ENCODE measurements at regions of chr12 and their contacts with region 1.

Region 1: GRCh38 chr12:49347384-49348237 is 923 bp downstream of the DNAJC22 start:
- DNase-seq: peak; percentile 98 to 99
- H3K4me3 ChIP-seq: peak overlapping the region; percentile 43
- H3K4me3 Mint-ChIP-seq: peak overlapping the region; percentile 90
- H3K27ac Mint-ChIP-seq: peak overlapping the region; percentile 98
- H3K4me1 ChIP-seq: peaks cover 16% of the 10 kb centered on the region
- H3K4me1 Mint-ChIP-seq: peaks cover 14% of the 10 kb centered on the region
- H3K27me3 ChIP-seq: no peaks in the 10 kb centered on the region
- H3K27me3 Mint-ChIP-seq: no peaks in the 10 kb centered on the region
- CTCF ChIP-seq: peak; percentile 97 to 98

Region 2: GRCh38 chr12:49288412-49288853 is 59.2 kb before region 1 on chr12:
- CTCF ChIA-PET with region 1: interaction called, 22 read pairs
- POLR2A ChIA-PET with region 1: no interaction called
- intact Hi-C with region 1: loop called (anchors 2 kb)
- DNase-seq: peak in 1 of 2 experiments; percentile 75
- H3K4me3 ChIP-seq: no peak overlapping the region
- H3K4me3 Mint-ChIP-seq: no peak overlapping the region
- H3K27ac Mint-ChIP-seq: no peak overlapping the region
- H3K4me1 ChIP-seq: peaks cover 3% of the 10 kb centered on the region; the same call in 1 of the 2 replicates
- H3K4me1 Mint-ChIP-seq: peaks cover 6% of the 10 kb centered on the region
- H3K27me3 ChIP-seq: no peaks in the 10 kb centered on the region
- H3K27me3 Mint-ChIP-seq: peaks cover 3% of the 10 kb centered on the region
- CTCF ChIP-seq: peak; percentile 77 to 96

Region 3: GRCh38 chr12:49322708-49323523 is 24.7 kb before region 1 on chr12 and contains the start of gene TROAP:
- CTCF ChIA-PET with region 1: interaction called, 68 read pairs
- POLR2A ChIA-PET with region 1: interaction called, 13 read pairs
- intact Hi-C with region 1: no loop called
- DNase-seq: peak; percentile 99 to 100
- H3K4me3 ChIP-seq: peak within 1 kb of the TSS; percentile 89
- H3K4me3 Mint-ChIP-seq: peak within 1 kb of the TSS; percentile 99
- H3K27ac Mint-ChIP-seq: peak within 1 kb of the TSS; percentile 98
- H3K4me1 ChIP-seq: peaks cover 10% of the 10 kb centered on the region; the same call in 1 of the 2 replicates
- H3K4me1 Mint-ChIP-seq: peaks cover 6% of the 10 kb centered on the region
- H3K27me3 ChIP-seq: no peaks in the 10 kb centered on the region
- H3K27me3 Mint-ChIP-seq: no peaks in the 10 kb centered on the region
- CTCF ChIP-seq: no peak
- total RNA-seq, gene TROAP: 134 and 135 TPM in 2 replicates

Region 4: GRCh38 chr12:49336645-49337584 is 10.7 kb before region 1 on chr12 and contains the start of gene C1QL4:
- CTCF ChIA-PET with region 1: interaction called, 153 read pairs
- POLR2A ChIA-PET with region 1: interaction called, 30 read pairs
- intact Hi-C with region 1: no loop called
- DNase-seq: peak; percentile 87 to 97
- H3K4me3 ChIP-seq: peak within 1 kb of the TSS; percentile 49
- H3K4me3 Mint-ChIP-seq: peak within 1 kb of the TSS; percentile 73
- H3K27ac Mint-ChIP-seq: no peak within 1 kb of the TSS
- H3K4me1 ChIP-seq: peaks cover 13% of the 10 kb centered on the region
- H3K4me1 Mint-ChIP-seq: peaks cover 20% of the 10 kb centered on the region
- H3K27me3 ChIP-seq: no peaks in the 10 kb centered on the region
- H3K27me3 Mint-ChIP-seq: no peaks in the 10 kb centered on the region
- CTCF ChIP-seq: peak; percentile 98 to 99
- total RNA-seq, gene C1QL4: 2.6 and 3.6 TPM in 2 replicates

Region 5: DNA sequence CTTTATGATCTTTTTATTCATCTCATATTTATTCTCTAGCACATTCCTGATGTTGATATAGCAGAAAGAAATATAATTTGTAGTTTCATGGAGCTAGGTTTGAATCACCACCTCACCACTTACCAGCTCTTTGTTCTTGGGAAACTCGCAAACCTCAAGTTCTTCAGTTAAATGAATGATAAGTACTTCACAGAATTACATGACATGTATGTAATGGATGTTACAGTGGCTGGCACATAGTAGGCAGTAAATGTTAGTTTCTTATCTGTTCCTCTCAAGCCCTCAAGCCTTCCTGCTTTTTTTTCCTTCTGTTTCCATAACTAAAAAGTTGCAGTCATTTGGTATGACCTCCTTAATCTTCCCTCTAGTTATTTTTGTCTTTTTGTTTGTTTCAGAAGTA is 74.5 kb after region 1 on chr12:
- CTCF ChIA-PET with region 1: interaction called, 17 read pairs
- POLR2A ChIA-PET with region 1: no interaction called
- intact Hi-C with region 1: no loop called
- DNase-seq: no peak
- H3K4me3 ChIP-seq: no peak overlapping the region
- H3K4me3 Mint-ChIP-seq: no peak overlapping the region
- H3K27ac Mint-ChIP-seq: peak overlapping the region; percentile 40
- H3K4me1 ChIP-seq: peaks cover 49% of the 10 kb centered on the region
- H3K4me1 Mint-ChIP-seq: peaks cover 36% of the 10 kb centered on the region
- H3K27me3 ChIP-seq: no peaks in the 10 kb centered on the region
- H3K27me3 Mint-ChIP-seq: no peaks in the 10 kb centered on the region
- CTCF ChIP-seq: no peak

Measured in Caco-2 (cell line).